RWPE1 (cell line): ENCODE measurements at regions of chr15 and their contacts with region 1.

Region 1: DNA sequence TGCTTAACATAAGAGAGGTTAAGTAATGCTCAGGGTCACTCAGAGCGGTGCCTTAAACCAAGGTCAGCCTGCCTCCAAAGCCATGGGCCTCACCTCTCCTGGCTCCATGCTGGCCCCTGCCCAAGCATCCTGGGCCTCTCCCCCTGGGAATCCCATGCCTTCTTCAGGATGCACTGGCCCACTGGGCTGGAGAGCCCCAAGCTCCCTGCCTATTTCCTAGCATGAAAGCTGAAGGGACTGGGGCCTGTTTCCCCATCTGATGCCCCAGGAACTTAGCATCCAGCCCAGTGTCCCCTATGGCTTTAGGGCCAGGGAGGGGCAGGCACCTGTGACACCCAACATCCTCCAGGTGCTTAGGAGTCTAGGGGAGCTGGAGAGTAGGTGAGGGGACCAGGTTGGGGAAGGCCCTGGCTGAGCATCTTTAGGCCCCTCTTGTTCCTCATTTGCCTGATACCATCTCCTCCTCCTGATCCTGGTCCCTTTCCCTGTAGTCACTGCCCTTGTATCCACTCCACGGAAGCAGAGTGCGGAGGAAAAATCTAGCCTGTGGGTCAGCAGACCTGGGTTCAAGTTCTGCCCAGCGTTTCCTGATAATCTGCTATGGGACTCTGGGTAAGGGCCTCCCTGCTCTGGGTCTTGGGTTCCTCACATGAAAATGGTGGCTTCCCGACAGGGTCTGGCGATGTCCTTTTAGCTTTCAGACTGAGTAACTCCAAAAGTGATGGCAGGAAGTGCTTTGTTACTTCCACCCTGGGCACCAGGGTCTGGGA is 28.6 kb downstream of the EHD4 start:
- DNase-seq: no peak
- H3K27ac ChIP-seq: peak overlapping the region; percentile 95
- CTCF ChIP-seq: no peak

Region 2: DNA sequence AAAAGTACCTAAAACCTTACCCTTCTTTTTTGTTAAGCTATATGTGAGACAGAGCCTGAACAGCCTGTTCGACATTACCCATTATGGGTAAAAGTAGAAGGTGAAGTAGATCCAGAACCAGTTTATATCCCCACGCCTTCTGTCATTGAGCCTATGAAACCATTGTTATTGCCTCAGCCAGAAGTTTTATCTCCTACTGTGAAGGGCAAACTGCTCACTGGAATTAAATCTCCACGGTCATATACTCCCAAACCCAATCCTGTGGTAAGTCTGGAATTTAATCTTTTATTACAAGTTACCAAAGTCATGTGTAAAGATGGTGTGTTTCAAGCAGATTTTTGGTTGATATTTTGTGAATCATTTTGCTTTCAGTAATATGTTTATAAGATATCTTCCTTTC is 216.6 kb before region 1 on chr15:
- CTCF ChIA-PET with region 1: interaction called, 11 read pairs
- POLR2A ChIA-PET with region 1: no interaction called
- DNase-seq: no peak
- H3K27ac ChIP-seq: no peak overlapping the region
- CTCF ChIP-seq: no peak

Region 3: DNA sequence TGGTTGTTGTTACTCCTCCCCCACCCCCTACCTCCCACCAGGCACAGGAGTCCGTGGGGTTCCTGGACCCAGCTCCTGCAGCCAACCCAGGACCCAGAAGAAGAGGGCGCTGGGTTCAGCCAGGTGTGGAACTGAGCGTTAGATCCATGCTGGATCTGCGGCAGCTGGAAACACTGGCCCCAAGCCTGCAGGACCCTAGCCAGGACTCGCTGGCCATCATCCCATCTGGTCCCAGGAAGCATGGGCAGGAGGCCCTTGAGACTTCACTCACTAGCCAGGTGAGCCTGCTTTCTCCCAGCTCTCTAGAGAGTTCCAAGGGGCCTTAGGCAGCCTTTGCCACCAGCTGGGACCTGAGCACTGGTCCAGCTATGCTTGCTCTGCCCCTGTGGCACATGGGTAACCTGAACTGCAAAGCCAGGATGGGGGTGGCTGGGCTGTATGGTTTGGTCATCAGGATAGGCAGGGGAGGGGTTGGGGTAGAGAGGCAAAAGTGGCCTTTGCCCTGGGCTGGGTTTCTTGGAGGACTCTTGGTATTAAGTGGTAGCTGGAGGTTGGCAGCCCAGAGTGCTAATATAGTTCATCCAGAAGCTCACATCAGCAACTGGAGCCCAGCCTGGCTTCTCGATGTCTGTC is 122.8 kb before region 1 on chr15:
- CTCF ChIA-PET with region 1: no interaction called
- POLR2A ChIA-PET with region 1: no interaction called
- DNase-seq: no peak
- H3K27ac ChIP-seq: peak overlapping the region; percentile 88
- CTCF ChIP-seq: no peak